Prostate gland (tissue), 2 donors: ENCODE measurements at regions of chr11 and their contacts with region 1.

Region 1: DNA sequence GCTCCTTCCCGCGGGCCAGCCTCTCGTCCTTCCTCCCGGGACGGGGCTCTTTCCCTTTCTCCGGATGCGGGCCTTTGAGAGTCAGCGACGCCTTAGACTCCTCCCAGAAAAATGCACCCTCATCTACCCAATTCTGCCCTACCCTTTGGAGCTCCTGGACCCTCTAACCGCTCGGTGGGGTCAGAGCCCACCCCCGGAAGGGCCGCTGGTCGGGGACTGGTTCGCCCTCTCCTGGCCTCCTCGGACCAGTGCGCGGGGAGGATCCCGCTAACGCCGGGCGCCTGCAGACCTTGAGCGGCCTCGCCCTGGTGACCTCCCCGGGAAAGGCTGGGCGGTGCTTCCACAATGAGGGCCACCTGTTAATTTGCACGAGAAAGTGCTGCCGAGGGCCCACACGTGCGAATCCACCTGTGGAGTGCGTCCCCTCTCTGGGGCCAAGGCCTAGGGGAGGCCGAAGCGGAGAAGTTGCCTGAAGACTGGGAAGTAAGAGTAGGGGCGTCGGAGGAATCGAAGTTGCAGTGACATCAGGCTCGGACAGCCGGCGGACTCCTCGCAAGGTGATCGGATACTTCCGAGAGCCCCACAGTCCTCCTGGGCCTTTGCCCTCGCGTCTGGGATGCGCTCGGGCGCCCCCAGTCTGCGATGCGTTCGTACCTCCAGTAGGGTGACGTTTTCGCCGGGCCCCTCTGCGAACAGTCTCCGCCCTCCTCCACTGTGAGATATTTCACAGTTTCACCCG is 61.5 kb downstream of the ENDOD1 start:
- DNase-seq: peak; percentile 93
- H3K4me3 ChIP-seq: peak overlapping the region; percentile 39 to 41
- H3K27ac ChIP-seq: peak overlapping the region; percentile 85 to 91
- H3K4me1 ChIP-seq: no peaks in the 10 kb centered on the region
- H3K27me3 ChIP-seq: no peaks in the 10 kb centered on the region
- CTCF ChIP-seq: peak; percentile 68 to 99 (median 88)
- POLR2A ChIP-seq: peak; percentile 68

Region 2: DNA sequence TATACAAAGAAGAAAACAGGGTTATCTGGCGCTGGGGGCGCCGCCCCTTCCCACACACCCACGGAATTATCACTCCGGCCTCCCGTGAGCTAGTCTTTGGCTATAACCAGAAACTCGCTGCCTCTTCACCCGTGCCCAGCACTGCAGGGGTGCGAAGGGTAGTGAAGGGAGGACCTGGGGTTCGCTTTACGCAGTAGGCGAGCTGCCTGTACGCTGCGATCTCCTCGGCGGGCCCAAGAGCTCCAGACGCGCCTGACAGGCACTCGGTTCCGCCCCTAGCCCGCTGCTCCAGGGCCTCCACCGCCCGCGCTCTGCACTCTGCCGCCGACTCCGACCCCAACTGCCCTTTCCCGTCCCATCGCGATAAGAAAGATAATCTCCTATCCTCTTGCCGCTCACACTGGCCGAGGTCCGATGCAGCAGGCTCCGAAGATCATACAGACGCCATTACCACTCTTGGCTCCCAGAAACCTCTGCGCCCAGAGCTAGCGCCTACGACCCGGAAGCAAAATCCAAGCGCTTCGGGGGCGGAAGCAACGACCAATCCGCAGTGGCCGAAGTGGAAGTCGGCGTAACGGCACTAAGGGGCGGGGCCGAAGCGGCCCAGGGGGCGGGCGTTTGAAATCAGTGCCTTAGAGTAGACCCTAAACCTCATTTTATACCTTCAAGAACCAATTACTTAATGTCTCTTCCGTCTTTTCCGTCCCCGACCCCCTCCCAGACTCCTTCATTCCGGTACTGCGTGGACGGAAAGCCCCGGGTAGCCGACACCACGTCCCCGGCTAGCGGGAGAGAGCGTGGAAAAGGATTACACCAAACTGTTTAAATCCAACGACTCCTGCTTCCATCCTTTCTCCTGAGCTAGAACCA is 177.8 kb before region 1 on chr11 and contains the starts of genes CWC15 and KDM4D:
- intact Hi-C with region 1: loop called (anchors 2 kb)
- DNase-seq: peak; percentile 94
- H3K4me3 ChIP-seq: peak within 1 kb of the TSS; percentile 69 to 85
- H3K27ac ChIP-seq: peak within 1 kb of the TSS; percentile 73 to 78
- H3K4me1 ChIP-seq: no peaks in the 10 kb centered on the region
- H3K27me3 ChIP-seq: no peaks in the 10 kb centered on the region
- CTCF ChIP-seq: peak in 1 of 4 experiments; percentile 15
- POLR2A ChIP-seq: peak; percentile 38
- total RNA-seq, gene CWC15: 33.6 to 43.8 TPM
- total RNA-seq, gene KDM4D: 2.6 to 9.9 TPM

Region 3: DNA sequence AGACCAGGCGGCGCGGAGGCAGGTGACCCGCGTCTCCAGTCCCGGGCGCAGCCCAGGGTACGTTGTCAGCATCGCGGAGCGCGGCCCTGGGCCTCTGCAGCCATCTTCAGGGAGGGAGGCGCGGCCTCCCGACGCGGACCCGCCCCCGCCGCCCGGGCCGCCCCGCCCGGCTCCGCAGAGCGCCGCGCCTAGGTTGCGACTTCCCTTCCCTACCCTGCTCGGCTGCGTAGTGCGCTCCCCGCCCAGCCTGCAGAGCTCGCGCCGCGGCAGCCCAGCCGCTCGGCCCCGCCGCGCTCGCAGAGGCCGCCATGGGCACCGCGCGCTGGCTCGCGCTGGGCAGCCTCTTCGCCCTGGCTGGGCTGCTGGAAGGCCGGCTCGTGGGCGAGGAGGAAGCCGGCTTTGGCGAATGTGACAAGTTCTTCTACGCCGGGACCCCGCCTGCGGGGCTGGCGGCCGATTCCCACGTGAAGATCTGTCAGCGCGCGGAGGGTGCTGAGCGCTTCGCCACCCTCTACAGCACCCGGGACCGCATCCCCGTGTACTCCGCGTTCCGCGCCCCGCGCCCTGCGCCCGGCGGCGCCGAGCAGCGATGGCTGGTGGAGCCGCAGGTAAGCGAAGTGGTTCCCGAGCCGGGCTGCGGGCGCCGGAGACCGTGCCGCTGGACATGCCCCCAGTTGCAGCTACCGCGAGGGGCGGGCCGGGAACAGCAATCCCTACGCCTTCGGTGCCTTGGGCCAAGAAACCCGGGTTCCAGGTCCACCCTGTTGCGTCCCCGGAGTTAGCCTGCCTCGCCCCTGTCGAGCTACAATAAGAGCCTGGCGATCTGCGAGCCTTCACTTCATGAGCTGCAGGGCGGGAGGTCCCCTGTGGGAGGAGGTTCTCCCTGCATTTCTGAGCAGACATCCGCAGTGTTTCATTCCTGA is 61.2 kb before region 1 on chr11 and contains the start of gene ENDOD1:
- intact Hi-C with region 1: loop called (anchors 5 kb)
- DNase-seq: peak; percentile 80
- H3K4me3 ChIP-seq: peak within 1 kb of the TSS; percentile 92 to 96
- H3K27ac ChIP-seq: peak within 1 kb of the TSS; percentile 94 to 95
- H3K4me1 ChIP-seq: peaks cover 18% of the 10 kb centered on the region
- H3K27me3 ChIP-seq: no peaks in the 10 kb centered on the region
- CTCF ChIP-seq: peak in 2 of 4 experiments; percentile 18 to 30
- POLR2A ChIP-seq: peak; percentile 81
- total RNA-seq, gene ENDOD1: 49.6 to 79.8 TPM

Region 4: DNA sequence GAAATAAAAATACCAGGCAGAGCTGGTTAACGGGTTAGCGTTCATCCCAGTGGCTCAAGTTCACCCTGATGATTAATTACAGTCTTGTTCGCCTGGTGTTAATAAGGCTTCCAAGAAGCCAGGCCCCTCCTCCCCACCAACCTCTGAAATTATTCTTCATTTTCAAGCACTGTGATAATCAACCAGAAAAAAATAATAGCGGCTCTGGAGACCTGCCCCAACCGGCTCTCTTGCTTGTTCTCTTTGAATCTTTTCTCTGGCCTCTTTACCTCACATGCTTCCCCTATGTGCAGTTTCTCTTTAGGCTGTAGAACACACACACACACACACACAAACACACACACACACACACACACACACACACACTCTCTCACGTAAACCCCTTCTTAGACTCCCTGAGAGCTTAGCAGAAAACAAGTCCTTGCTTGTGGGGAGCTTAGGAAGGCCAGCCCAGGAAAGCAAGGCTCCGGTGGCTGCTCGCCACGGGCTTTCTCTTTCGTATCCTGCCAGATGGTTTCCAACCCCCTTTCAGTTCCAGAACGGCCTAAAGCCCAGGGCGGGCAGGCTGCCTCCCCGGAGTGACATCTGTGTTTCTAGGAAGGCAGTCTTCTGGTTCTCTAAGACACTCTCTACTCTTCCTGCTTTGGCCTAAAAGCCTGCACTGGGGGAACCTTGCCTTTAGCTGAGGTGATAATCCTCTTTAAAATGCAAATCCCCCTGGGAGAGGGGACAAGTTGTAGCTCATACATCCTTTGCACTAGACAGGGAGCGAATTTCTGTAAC is 186.3 kb after region 1 on chr11:
- intact Hi-C with region 1: loop called (anchors 10 kb)
- DNase-seq: peak; percentile 64
- H3K4me3 ChIP-seq: no peak overlapping the region
- H3K27ac ChIP-seq: peak overlapping the region; percentile 74 to 75
- H3K4me1 ChIP-seq: peaks cover 13% of the 10 kb centered on the region
- H3K27me3 ChIP-seq: no peaks in the 10 kb centered on the region
- CTCF ChIP-seq: no peak
- POLR2A ChIP-seq: no peak

Region 5: DNA sequence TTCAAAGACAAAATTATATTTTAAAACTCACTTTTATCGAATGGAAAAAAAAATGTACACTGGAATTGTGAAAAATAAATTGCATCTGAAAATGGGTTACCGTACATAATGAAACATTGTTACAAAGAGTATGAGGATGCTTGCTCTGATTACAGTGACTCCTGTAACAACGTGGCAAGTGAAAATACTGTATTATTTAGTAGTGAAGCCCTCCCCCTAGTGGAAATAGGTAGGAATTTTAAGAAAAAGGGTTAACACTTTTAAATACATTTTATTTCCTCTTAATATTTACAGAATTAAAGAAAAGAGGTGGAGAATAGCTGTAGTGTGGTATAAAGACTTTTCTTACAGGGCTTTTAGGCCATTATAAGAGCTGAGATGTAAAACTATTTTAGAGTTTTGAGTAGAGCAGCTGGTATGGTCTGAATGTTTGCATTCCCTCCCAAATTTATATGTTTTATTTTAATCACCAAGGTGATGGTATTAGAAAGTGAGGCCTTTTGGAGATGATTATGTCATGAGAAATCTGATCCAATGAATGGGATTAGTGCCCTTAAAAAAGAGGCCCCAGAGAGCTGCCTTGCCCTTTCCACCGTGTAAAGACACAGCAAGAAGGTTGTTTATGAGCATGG is 613.3 kb after region 1 on chr11:
- intact Hi-C with region 1: loop called (anchors 2 kb)
- DNase-seq: no peak
- H3K4me3 ChIP-seq: no peak overlapping the region
- H3K27ac ChIP-seq: no peak overlapping the region
- H3K4me1 ChIP-seq: no peaks in the 10 kb centered on the region
- H3K27me3 ChIP-seq: no peaks in the 10 kb centered on the region
- CTCF ChIP-seq: peak; percentile 32 to 88 (median 82)
- POLR2A ChIP-seq: no peak